OCI-LY7 (cell line): ENCODE measurements at regions of chr2 and their contacts with region 1.

Region 1: GRCh38 chr2:213284105-213285090 is at the start of gene SPAG16:
- DNase-seq: peak; percentile 99
- H3K4me3 ChIP-seq: peak within 1 kb of the TSS; percentile 85
- H3K27ac ChIP-seq: peak within 1 kb of the TSS; percentile 27
- H3K4me1 ChIP-seq: peaks cover 23% of the 10 kb centered on the region
- CTCF ChIP-seq: no peak; the same call in 1 of the 2 replicates
- total RNA-seq, gene SPAG16: 16.6 and 24.2 TPM in 2 replicates

Region 2: DNA sequence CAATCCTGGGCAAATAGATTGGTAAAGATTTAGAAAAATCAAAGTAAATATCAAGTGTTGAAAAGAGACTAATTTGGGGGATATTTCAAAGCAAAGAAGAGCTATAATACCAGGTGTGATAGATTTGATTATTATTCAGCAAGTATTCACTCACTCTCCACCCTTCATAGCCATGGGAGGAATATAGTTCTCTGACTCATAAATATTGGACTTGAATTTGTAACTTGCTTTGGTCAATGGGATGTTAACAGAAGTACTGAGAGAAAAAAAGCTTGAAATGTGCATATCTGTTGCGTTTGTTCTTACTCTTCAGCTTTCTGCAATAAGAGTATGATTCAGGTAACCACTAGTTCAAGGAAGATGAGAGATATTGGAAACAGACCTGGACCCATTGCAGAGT is 78.5 kb before region 1 on chr2:
- CTCF ChIA-PET with region 1: no interaction called
- POLR2A ChIA-PET with region 1: no interaction called
- intact Hi-C with region 1: no loop called
- DNase-seq: no peak
- H3K4me3 ChIP-seq: no peak overlapping the region
- H3K27ac ChIP-seq: no peak overlapping the region
- H3K4me1 ChIP-seq: peaks cover 3% of the 10 kb centered on the region
- CTCF ChIP-seq: no peak

Region 3: DNA sequence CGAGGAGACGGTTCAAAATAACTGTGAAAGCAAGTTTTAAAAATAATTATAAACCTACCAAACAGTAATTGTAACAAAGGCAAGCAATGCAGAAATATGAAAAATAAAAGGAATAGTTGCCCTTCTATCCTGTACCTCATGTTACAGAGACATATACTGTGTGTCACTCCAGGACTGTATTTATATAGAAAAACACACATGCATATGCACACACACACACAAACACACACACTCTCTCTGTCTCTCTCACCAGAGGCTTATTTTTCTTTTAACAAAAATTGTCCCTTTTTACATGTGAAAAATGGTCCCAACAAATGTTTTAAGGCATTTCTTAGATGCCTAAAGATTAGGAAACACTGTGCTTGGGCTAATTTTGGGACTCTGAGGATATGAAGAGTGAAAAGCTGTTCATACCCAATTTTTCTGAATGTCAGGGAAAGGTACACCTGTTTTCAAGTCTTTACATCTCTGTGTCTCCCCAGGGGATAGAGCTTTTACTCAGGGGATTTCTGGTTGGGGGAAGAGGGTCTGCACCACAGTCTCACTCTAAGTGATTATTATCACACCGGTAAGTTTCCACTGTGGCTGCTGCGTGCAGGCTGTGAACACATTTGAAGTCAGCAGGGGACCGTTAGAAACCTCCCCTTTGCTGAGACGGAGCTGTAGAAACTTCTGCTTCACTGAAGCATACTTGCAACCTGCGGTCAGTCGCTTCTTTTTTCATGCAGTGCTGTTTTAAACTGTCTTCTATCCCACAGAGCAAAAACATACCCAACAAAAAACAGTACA is 51.6 kb before region 1 on chr2:
- CTCF ChIA-PET with region 1: no interaction called
- POLR2A ChIA-PET with region 1: interaction called, 6 read pairs
- intact Hi-C with region 1: loop called (anchors 1 kb)
- DNase-seq: peak; percentile 99
- H3K4me3 ChIP-seq: peak overlapping the region; percentile 56
- H3K27ac ChIP-seq: peak overlapping the region; percentile 97
- H3K4me1 ChIP-seq: peaks cover 98% of the 10 kb centered on the region
- CTCF ChIP-seq: no peak

Region 4: DNA sequence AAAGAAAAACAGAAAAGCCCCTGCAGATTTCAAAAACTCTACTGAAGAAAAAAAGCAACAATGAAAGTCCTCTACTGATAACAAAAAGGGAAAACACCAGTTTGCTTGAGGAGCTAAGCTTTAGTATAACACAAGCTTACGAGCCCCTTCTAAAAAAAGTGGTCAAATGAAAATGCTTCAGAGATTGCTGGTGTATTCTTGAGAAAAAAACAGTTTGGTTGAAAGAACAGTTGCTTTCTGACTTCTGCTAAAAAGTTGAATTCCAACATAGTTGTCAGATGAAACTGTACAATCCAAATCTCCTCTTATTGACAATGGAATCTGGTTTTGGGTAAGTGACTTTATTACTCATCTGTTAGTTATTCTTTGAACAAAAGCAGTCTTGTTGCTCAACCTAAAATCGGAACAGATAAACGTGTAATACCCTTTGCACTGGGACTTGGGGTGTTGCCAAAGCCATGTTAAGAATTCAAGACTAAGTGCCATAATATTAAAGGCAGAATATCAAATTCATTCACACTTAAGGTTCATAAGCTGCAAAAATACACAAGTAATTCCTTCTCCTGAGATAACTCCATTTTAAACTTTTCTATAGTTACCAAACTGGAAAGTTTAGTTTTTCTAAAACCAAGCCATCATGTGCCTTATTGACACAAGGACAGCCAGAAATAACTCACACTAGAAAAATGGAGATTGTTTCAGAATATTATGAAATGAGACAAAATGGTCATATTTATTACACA is 45.5 kb before region 1 on chr2:
- CTCF ChIA-PET with region 1: interaction called, 5 read pairs
- POLR2A ChIA-PET with region 1: interaction called, 19 read pairs
- intact Hi-C with region 1: no loop called
- DNase-seq: no peak
- H3K4me3 ChIP-seq: no peak overlapping the region
- H3K27ac ChIP-seq: peak overlapping the region; percentile 32
- H3K4me1 ChIP-seq: peaks cover 94% of the 10 kb centered on the region
- CTCF ChIP-seq: no peak

Region 5: GRCh38 chr2:213274143-213274542 is 10.3 kb before region 1 on chr2:
- CTCF ChIA-PET with region 1: no interaction called
- POLR2A ChIA-PET with region 1: interaction called, 12 read pairs
- intact Hi-C with region 1: no loop called
- DNase-seq: no peak
- H3K4me3 ChIP-seq: no peak overlapping the region
- H3K27ac ChIP-seq: no peak overlapping the region
- H3K4me1 ChIP-seq: no peaks in the 10 kb centered on the region
- CTCF ChIP-seq: no peak

Region 6: DNA sequence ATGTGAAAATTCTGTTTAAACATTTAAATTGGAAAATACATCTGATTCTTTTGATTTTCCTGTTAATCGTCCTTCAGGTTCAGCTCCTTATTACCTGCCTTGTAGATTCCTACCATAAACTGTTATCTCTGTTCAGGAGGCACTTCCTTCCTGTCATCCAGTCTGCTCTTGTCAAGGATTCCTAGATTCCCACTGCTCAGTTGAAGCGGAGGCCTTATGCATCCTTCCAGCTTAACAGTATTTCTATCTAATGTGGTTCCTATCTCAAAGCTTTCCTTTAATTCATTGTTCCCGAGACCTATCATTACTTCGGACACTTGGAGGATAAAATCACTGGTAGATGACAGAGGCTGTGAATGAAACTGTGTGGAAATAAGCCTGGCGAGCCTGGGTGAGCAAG is 11.9 kb after region 1 on chr2:
- CTCF ChIA-PET with region 1: interaction called, 4 read pairs
- POLR2A ChIA-PET with region 1: interaction called, 24 read pairs
- intact Hi-C with region 1: no loop called
- DNase-seq: no peak
- H3K4me3 ChIP-seq: no peak overlapping the region
- H3K27ac ChIP-seq: no peak overlapping the region
- H3K4me1 ChIP-seq: no peaks in the 10 kb centered on the region
- CTCF ChIP-seq: no peak

Region 7: DNA sequence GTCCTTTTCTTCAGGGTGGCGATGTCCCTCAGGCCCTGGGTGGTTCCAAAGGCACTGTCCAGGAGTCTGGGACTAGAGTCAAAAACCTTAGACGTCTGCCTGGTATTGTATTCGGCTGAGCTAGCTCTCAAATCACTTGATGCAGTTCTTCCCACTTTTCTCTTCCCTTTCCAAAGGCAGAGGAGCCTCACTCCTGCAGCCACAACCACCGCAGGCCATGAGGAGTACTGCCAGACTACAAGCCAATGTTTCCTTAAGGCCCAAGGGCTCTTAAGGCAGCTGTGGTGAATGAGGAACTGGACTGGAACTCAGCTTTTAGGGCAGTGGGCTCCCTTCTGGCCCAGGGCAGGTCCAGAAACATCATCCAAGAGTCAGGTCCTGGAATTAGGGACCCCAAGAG is 360.5 kb after region 1 on chr2:
- CTCF ChIA-PET with region 1: no interaction called
- POLR2A ChIA-PET with region 1: no interaction called
- intact Hi-C with region 1: no loop called
- DNase-seq: no peak
- H3K4me3 ChIP-seq: no peak overlapping the region
- H3K27ac ChIP-seq: no peak overlapping the region
- H3K4me1 ChIP-seq: no peaks in the 10 kb centered on the region
- CTCF ChIP-seq: no peak